OCI-LY7 (cell line): ENCODE measurements at regions of chr12 and their contacts with region 1.

Region 1: DNA sequence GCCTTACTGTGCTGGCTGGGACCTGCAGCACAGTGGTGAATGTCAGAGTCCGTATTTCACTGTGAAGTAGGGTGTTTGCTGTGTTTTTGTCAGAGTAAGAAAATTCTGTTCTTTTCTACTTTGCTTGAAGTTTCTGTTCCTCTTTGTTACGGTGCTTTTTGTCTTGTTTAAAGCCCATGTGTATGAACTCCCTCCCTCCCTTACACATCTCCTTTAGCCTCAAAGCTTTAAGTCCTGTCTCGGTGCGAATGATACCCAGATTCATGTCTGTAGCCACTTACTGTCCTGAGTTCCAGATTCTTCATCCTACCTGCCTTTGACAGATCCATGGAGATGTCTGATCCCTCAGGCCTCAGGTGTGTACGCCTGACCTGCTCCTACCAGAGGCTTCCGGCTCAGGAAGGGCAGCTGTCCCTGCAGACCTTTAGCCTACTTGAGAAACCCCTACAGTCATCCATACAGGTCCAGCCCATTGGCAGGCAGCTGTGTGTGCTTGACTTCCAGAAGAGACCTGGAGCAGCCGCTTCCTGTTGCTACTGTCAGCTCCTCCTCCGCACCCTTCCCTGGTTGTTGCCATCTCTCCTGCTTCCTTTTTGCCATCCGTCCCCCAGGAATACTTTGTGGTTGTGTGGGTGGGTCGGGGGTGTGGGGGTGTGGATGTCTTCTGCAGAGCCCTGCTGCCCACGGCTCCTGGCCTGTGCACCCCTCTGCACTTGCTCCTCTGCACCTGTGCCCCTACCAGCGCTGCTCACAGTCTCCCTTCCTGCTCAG is 72.9 kb downstream of the DDX51 start:
- DNase-seq: peak; percentile 84
- H3K4me3 ChIP-seq: peak overlapping the region; percentile 54
- H3K27ac ChIP-seq: peak overlapping the region; percentile 96
- H3K4me1 ChIP-seq: peaks cover 54% of the 10 kb centered on the region
- CTCF ChIP-seq: no peak

Region 2: GRCh38 chr12:132117558-132117875 is 46.3 kb after region 1 on chr12:
- CTCF ChIA-PET with region 1: no interaction called
- POLR2A ChIA-PET with region 1: interaction called, 11 read pairs
- intact Hi-C with region 1: no loop called
- DNase-seq: no peak
- H3K4me3 ChIP-seq: no peak overlapping the region
- H3K27ac ChIP-seq: no peak overlapping the region
- H3K4me1 ChIP-seq: no peaks in the 10 kb centered on the region
- CTCF ChIP-seq: no peak